ENCODE measurements at regions of chr15 and their contacts with region 1.

Region 1: DNA sequence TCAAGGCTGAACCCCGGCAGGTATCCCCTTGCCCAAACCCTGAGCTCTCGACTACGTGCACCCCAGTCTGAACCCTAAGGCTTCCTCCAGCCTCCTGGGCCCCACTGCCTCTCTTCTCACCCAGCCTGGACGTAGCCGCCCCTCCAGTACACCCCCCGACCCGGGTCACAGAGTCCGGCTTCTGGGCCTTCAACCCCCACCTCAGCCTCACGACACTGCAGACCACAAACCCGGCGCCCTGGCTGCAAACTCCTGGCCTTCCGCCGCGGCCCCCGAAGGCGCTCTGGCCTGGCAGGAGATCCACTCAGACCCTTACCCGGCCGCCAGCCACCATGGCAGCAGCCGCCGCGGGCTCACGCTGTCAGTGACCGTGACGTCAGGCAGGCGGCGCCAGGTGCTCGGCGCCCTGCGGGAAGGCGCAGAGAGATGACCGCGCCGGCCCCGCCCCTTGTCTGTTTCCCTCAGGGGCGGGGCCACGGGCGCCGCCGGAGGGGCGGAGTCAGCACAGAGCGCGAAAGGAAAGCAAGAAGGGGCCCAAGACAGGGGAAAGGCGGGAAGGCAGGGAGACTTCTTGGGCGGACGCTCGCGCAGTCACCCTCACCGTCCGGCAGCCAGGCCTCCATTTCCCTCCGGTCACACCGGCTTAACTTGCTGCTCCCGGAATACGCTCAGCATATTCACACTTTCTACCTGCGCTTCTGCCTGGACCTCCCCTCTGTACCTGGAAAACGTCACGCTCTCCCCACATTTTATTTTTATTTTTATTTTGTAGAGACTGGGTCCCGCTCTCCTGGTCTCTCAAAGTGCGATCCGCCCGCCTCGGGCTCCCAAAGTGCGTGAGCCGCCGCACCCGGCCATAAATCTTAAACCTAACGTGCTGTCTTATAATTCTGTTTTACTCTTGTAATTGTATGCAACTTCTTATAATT is at the start of gene RMDN3:
- DNase-seq: peak; percentile 94 to 96
- ATAC-seq: peak; percentile 98 to 100 (median 99)
- H3K4me3 ChIP-seq: peak within 1 kb of the TSS; percentile 91
- H3K27ac ChIP-seq: peak within 1 kb of the TSS; percentile 77
- H3K4me1 ChIP-seq: peaks cover 15% of the 10 kb centered on the region
- H3K27me3 ChIP-seq: no peaks in the 10 kb centered on the region
- CTCF ChIP-seq: no peak
- total RNA-seq, gene RMDN3: 17.1 to 20.1 (median 18.6) TPM

Region 2: GRCh38 chr15:40382580-40383456 is 372.3 kb before region 1 on chr15 and contains the start of gene KNSTRN:
- intact Hi-C with region 1: no loop called
- DNase-seq: peak; percentile 89 to 94
- ATAC-seq: peak; percentile 88 to 92 (median 90)
- H3K4me3 ChIP-seq: peak within 1 kb of the TSS; percentile 92
- H3K27ac ChIP-seq: peak within 1 kb of the TSS; percentile 61
- H3K4me1 ChIP-seq: peaks cover 25% of the 10 kb centered on the region
- H3K27me3 ChIP-seq: no peaks in the 10 kb centered on the region
- CTCF ChIP-seq: no peak
- total RNA-seq, gene KNSTRN: 7.7 to 21.3 (median 11.6) TPM

Region 3: GRCh38 chr15:40807028-40807887 is 52.1 kb after region 1 on chr15 and contains the starts of genes DNAJC17 and ZFYVE19:
- intact Hi-C with region 1: loop called in 1 of 2 experiments (anchors 10 kb)
- DNase-seq: peak; percentile 97 to 98
- ATAC-seq: peak; percentile 99
- H3K4me3 ChIP-seq: peak within 1 kb of the TSS; percentile 87
- H3K27ac ChIP-seq: peak within 1 kb of the TSS; percentile 96
- H3K4me1 ChIP-seq: peaks cover 21% of the 10 kb centered on the region
- H3K27me3 ChIP-seq: no peaks in the 10 kb centered on the region
- CTCF ChIP-seq: no peak
- total RNA-seq, gene DNAJC17: 8.9 to 18.5 (median 13.0) TPM
- total RNA-seq, gene ZFYVE19: 9.1 to 12.4 (median 10.8) TPM

Region 4: GRCh38 chr15:41133454-41133853 is 378.3 kb after region 1 on chr15:
- intact Hi-C with region 1: no loop called
- DNase-seq: no peak
- ATAC-seq: no peak
- H3K4me3 ChIP-seq: no peak overlapping the region
- H3K27ac ChIP-seq: no peak overlapping the region
- H3K4me1 ChIP-seq: no peaks in the 10 kb centered on the region
- H3K27me3 ChIP-seq: no peaks in the 10 kb centered on the region
- CTCF ChIP-seq: no peak

Measured in psoas muscle (tissue), 8 donors.